CD8-positive, alpha-beta T cell (primary cell): ENCODE measurements at regions of chr16 and their contacts with region 1.

Region 1: DNA sequence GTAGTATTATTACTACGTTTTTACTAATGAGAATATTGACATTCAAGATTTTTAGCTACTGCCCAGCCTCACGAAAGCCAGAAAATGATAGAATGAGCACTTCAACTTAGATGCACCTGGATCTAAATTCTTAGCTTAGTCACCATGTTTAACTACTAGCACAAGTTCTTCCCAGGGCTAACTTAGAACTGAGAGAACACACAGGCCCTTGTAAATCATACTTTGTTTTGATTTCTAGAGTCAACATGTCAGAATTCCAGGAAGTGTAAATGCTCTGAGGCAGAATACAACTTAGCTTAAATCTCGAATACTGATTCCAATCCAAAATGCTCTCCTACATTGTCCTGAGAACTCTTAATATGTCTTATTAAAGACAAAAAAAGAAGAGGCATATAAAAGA is 6.8 kb upstream of the ACSM1 start:
- DNase-seq: no peak
- ATAC-seq: no peak
- H3K4me3 ChIP-seq: no peak overlapping the region
- H3K4me3 Mint-ChIP-seq: no peak overlapping the region
- H3K27ac ChIP-seq: no peak overlapping the region
- H3K27ac Mint-ChIP-seq: no peak overlapping the region
- H3K4me1 ChIP-seq: no peaks in the 10 kb centered on the region
- H3K4me1 Mint-ChIP-seq: no peaks in the 10 kb centered on the region
- H3K27me3 ChIP-seq: no peaks in the 10 kb centered on the region
- H3K27me3 Mint-ChIP-seq: no peaks in the 10 kb centered on the region
- CTCF ChIP-seq: no peak

Region 2: DNA sequence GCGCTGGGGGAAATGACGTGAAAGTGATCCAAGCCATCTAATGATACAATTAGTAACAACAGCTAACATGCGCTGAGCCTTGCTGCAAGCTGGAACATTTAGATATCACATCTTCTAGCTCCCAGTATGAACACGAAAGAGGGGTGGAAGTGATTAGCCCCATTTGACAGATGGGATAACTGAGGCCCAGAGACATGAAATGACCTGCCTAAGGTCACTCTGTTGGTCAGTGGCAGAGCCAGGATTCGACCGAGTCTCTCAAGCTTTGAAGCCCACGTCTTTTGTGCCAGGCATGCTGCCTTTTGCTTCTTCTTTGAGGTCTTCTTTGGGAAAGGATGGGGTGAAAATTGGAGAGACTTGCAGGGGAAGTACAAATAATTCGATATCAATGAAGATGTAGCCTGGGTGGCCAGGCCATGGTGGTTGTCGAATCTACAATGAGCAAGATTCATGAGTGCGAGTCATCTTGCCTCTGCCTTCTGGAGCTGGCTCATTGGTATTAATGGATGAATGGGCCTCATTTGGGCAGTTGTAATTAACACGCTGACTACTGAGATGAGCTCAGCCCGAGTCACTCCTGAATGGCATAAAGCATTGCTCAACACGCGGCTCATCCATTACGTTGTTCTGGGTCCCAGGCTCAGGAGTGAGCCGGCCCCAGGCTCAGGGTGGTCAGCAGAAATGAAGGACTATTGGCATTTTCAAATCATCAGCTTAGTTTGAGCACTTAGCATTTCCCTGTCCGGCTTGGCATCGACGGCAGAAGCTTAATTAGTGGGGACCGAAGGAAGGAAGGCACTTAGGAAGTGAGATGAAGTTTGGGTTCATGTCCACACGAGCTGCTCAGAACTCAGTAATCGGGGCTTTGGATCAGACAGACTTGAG is 791.6 kb before region 1 on chr16:
- CTCF ChIA-PET with region 1: no interaction called
- POLR2A ChIA-PET with region 1: no interaction called
- intact Hi-C with region 1: loop called in 1 of 2 experiments (anchors 10 kb)
- DNase-seq: no peak
- ATAC-seq: no peak
- H3K4me3 ChIP-seq: no peak overlapping the region
- H3K4me3 Mint-ChIP-seq: no peak overlapping the region
- H3K27ac ChIP-seq: no peak overlapping the region
- H3K27ac Mint-ChIP-seq: no peak overlapping the region
- H3K4me1 ChIP-seq: no peaks in the 10 kb centered on the region
- H3K4me1 Mint-ChIP-seq: peaks cover 5% of the 10 kb centered on the region
- H3K27me3 ChIP-seq: no peaks in the 10 kb centered on the region
- H3K27me3 Mint-ChIP-seq: peaks cover 27% of the 10 kb centered on the region
- CTCF ChIP-seq: no peak

Region 3: DNA sequence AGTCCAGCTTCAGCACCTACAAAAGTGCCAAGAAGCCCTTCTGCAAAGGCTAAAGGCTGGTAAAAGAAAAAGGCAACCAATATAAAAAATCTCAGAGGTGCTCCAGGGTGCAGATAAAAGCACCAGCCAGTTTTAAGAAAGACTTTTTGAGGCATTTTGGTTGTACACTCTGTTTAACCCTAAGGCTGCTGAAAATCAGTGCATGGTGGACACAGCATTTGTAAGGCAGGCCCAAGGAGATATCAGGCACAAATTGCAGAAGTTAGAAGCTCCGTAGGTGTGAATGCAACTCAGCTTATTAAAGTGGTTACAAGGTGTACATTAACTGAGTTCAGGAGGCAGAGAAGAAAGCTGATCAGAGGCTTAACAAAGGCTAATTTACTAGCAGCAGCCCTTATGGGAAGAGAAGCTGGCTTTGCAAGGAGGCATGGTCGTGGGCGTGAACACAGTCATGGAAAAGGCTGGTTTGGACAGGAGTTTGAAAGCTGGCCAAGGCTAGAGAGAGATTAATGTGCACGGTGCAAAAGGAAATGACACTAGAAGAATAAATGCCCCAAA is 27.9 kb before region 1 on chr16:
- CTCF ChIA-PET with region 1: no interaction called
- POLR2A ChIA-PET with region 1: no interaction called
- intact Hi-C with region 1: no loop called
- DNase-seq: no peak
- ATAC-seq: no peak
- H3K4me3 ChIP-seq: peak overlapping the region; percentile 47 to 49
- H3K4me3 Mint-ChIP-seq: peak overlapping the region; percentile 86
- H3K27ac ChIP-seq: peak overlapping the region; percentile 16 to 80
- H3K27ac Mint-ChIP-seq: peak overlapping the region; percentile 90
- H3K4me1 ChIP-seq: peaks cover 16% of the 10 kb centered on the region
- H3K4me1 Mint-ChIP-seq: peaks cover 39% of the 10 kb centered on the region
- H3K27me3 ChIP-seq: no peaks in the 10 kb centered on the region
- H3K27me3 Mint-ChIP-seq: no peaks in the 10 kb centered on the region
- CTCF ChIP-seq: no peak